Activated CD4-positive, alpha-beta memory T cell treated with anti-CD3 and anti-CD28 coated beads, Interleukin-2, amount 10 ng/mL, durations not matched to agents 7 days and 5 days (primary cell): ENCODE measurements at regions of chr17 and their contacts with region 1.

Region 1: DNA sequence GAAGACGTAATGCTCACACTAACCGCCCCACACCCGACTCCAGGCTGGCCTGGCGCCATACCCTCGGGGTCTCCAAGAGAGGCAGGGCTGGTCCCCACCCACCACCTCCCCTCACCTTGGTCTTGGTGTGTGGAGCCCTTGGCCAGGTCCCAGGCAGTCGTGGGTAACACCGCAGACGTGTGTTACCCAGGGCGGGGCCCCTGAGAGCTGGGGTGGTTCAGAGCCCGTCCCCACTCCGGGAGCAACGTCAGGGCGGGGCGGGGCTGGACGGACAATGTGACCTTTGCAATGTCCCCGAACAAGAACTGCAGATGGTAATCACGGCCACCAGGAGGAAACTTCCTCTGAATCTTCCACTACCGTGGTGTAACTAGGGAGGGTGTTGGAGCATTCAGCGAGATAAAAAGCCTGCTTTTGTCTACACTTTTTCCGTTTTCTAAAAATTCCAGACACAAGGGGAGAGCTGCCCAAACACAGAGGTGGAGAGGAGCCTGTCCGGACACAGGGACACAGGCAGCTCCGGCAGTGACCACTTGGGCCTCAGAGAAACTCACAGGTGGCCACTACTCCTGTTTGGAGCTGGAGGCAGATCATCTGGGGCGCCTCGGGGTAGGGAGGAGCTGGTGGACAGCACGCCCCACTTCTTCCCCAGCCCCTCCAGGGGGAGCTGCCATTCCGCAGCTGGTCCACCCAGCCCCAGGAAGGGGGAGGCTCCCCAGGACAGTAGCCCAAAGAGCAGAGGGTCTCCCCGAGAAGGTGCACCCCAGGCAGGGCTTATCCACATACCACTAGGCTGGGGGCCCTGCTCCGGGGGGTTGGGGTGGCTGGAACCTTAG is 14.2 kb upstream of the SLC38A10 start:
- DNase-seq: peak; percentile 46
- H3K4me3 Mint-ChIP-seq: no peak overlapping the region
- H3K27ac Mint-ChIP-seq: no peak overlapping the region
- H3K4me1 Mint-ChIP-seq: peaks cover 3% of the 10 kb centered on the region
- H3K27me3 Mint-ChIP-seq: peaks cover 7% of the 10 kb centered on the region

Region 2: DNA sequence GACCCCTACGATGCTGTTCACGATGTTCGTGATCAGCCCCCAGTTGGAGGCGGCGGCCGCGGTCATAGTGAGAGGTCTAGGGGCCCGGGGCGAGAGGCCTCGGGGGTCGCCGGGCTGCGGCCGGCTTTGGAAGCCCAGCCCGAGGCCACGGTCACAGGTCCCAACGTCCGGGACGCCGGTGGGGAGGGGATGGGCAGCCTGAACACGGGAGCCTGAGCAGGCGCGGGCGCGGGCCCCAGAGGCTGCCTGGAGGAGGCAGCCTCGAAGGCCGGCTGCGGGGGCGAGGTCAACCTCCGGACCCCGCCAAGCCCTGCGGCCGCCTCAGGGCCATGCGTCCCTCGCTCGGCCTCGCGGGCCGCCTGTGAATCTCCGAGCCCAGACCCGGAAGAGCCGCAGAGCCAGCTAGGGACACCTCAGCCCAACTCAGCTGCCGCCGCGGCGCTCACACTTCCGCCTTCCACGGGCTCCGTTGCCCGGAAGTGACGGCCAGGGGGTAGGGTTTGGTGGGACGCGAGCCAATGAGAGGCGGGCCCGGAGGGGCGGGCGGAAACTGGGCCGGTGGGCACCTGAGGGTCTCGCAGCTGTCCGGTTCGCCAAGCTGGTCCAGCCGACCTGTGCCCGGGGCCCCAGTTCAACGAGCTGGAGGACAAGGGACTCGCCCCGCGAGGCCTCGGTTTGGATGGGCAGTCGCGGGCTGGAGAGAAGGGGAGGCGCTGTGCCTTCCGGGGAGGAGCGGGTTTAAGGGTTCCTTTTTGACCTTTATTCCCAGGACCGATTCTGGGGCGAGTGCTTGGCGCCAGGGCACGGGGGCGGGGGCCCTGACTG is 14.2 kb before region 1 on chr17 and contains the start of gene SLC38A10:
- CTCF ChIA-PET with region 1: no interaction called
- POLR2A ChIA-PET with region 1: interaction called, 12 read pairs
- DNase-seq: peak; percentile 95
- H3K4me3 Mint-ChIP-seq: peak within 1 kb of the TSS; percentile 91
- H3K27ac Mint-ChIP-seq: peak within 1 kb of the TSS; percentile 94
- H3K4me1 Mint-ChIP-seq: peaks cover 47% of the 10 kb centered on the region
- H3K27me3 Mint-ChIP-seq: no peaks in the 10 kb centered on the region
- total RNA-seq, gene SLC38A10: 112 to 114 TPM